ENCODE measurements at regions of chr18 and their contacts with region 1.

Region 1: GRCh38 chr18:11310476-11311086 is 161.2 kb upstream of the PIEZO2 start:
- DNase-seq: peak in 1 of 2 experiments; percentile 83
- H3K4me3 ChIP-seq: no peak overlapping the region
- H3K27ac ChIP-seq: no peak overlapping the region
- H3K4me1 ChIP-seq: no peaks in the 10 kb centered on the region
- H3K27me3 ChIP-seq: no peaks in the 10 kb centered on the region
- CTCF ChIP-seq: peak; percentile 81 to 90 (median 90)
- EP300 ChIP-seq: no peak
- POLR2A ChIP-seq: no peak
- RAD21 ChIP-seq: peak; percentile 72 to 77

Region 2: DNA sequence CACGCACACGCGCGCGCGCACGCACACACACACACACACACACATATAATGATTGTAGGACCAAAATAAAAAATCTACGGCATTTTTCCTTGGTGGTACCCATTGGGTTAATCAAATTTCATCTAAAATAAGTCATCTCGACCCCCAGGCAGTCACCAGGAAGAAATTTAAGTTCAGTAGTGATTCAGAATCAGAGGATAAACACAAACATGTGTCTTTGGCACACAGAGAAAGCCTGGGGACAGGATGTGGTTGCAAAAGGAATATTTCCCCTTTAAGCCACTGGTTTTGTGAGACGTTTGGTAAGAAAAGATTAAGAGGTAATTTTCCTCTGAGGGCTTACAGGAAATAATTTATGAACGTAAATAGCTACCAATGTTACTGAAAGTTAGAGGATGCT is 10.4 kb after region 1 on chr18:
- CTCF ChIA-PET with region 1: interaction called, 15 read pairs
- POLR2A ChIA-PET with region 1: no interaction called
- DNase-seq: no peak
- H3K4me3 ChIP-seq: no peak overlapping the region
- H3K27ac ChIP-seq: no peak overlapping the region
- H3K4me1 ChIP-seq: no peaks in the 10 kb centered on the region
- H3K27me3 ChIP-seq: no peaks in the 10 kb centered on the region
- CTCF ChIP-seq: no peak
- EP300 ChIP-seq: no peak
- POLR2A ChIP-seq: no peak
- RAD21 ChIP-seq: no peak

Region 3: GRCh38 chr18:11502368-11502767 is 191.8 kb after region 1 on chr18:
- CTCF ChIA-PET with region 1: interaction called, 11 read pairs
- POLR2A ChIA-PET with region 1: no interaction called
- DNase-seq: no peak
- H3K4me3 ChIP-seq: no peak overlapping the region
- H3K27ac ChIP-seq: no peak overlapping the region
- H3K4me1 ChIP-seq: no peaks in the 10 kb centered on the region
- H3K27me3 ChIP-seq: no peaks in the 10 kb centered on the region
- CTCF ChIP-seq: no peak
- EP300 ChIP-seq: no peak
- POLR2A ChIP-seq: no peak
- RAD21 ChIP-seq: no peak

Region 4: GRCh38 chr18:11518788-11519685 is 208.5 kb after region 1 on chr18:
- CTCF ChIA-PET with region 1: interaction called, 22 read pairs
- POLR2A ChIA-PET with region 1: no interaction called
- DNase-seq: peak; percentile 38 to 85
- H3K4me3 ChIP-seq: 0 out of 8 replicates have a peak overlapping the region, but pooled peaks of 1 of the 4 experiments have one; percentile 8
- H3K27ac ChIP-seq: no peak overlapping the region
- H3K4me1 ChIP-seq: no peaks in the 10 kb centered on the region; a peak in 1 of 7 replicates
- H3K27me3 ChIP-seq: peaks cover 0 to 2% (median under 1%) of the 10 kb centered on the region in 4 experiments; a peak in 5 of 7 replicates
- CTCF ChIP-seq: peak; percentile 91 to 100 (median 99)
- EP300 ChIP-seq: no peak
- POLR2A ChIP-seq: no peak
- RAD21 ChIP-seq: peak; percentile 76 to 84

Region 5: DNA sequence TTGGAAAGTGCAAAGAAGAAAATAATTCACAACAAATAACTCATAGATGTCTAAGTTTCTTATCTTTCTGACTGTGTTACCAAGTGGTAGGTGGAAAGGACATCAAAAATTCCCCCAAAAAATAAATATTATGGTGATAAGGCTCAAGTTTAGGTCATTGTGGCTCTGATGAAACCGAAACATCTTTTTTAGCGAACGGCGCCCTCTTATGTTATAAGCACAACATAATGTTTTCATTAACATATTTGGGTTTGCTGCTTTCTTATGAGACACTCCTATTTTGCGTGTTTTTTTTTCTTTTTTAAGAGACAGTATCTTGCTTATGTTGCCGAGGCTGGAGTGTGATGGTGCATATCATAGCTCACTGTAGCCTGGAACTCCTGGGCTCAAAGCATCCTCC is 260.2 kb after region 1 on chr18:
- CTCF ChIA-PET with region 1: interaction called, 15 read pairs
- POLR2A ChIA-PET with region 1: no interaction called
- DNase-seq: no peak
- H3K4me3 ChIP-seq: no peak overlapping the region
- H3K27ac ChIP-seq: no peak overlapping the region
- H3K4me1 ChIP-seq: no peaks in the 10 kb centered on the region; a peak in 1 of 7 replicates
- H3K27me3 ChIP-seq: no peaks in the 10 kb centered on the region
- CTCF ChIP-seq: peak in 1 of 3 experiments; percentile 14; a peak in 1 of 4 replicates
- EP300 ChIP-seq: no peak
- POLR2A ChIP-seq: no peak
- RAD21 ChIP-seq: peak; percentile 42 to 48